ENCODE measurements at regions of chr17 and their contacts with region 1.

Region 1: DNA sequence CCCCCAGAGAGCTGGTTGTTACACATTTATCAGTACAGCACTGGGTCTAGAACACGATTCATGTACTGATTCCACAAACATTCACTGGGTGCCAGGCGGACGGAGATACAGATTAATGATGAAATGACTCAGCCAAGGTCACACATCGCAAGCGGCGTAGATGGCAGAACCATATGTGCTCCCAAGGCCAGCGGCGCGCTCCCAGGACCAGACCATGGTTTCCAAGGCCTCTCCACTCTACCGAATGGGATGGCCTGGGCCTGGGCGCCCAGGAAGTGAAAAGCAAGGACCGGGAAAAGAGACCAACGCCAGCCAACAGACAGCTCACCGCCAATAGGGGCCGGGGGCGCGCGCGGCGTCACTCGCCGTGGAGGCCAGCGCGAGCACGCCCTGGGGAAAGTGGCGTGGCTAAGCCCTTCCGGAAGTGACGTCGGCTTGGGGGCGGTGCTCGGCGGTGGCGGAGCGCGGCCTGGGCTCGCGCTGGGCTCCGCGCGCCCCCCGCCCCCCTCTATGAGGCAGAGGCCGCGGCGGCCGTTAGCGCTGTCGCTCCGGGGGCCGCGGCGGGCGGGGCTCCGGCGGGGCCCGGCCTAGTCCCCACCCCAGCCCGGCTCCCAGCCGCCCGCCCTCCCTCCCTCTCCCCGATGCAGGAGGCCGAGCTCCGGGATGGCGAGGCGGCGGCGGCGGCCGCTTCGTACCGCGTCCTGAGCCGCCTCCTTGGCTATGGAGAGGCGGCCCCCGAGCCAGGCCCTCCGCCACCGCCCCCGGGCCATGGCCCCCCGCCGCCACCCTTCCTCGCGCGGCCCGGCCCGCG is at the start of gene SOCS7:
- DNase-seq: peak; percentile 95
- CTCF ChIP-seq: no peak

Region 2: GRCh38 chr17:38322091-38322779 is 29.4 kb before region 1 on chr17:
- CTCF ChIA-PET with region 1: interaction called, 99 read pairs
- POLR2A ChIA-PET with region 1: no interaction called
- DNase-seq: peak; percentile 84
- CTCF ChIP-seq: peak; percentile 69

Region 3: DNA sequence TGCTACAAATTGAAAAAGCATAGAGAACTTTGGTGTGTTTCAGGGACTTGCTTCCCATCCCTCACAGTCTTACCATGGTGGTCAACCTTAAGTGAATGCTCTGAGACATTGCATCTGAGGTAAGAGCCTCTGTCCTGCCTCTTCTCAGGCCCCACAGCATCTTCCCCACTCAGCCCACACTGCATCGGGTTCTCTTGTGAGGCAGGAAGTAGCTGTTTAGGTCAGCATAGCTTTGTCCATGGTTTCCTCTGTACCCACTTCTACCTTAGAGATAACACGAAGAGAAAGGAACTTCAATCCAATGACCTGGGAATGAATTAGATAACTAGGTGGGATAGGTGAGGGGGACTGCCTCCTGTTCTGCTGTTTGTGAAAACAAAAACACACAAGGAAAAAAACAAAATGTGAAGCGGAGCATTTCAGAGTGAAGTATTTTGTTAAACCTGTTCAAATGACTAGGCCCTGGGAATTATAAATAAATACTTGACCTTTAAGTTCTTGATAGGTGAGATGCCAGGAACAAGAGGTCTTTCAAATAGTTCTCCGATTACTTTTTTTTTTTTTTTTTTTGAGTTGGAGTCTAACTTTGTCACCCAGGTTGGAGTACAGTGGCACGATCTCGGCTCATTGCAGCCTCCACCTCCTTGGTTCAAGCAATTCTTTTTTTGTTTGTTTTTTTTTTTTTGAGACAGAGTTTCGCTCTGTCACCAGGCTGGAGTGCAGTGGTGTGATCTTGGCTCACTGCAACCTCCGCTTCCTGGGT is 17.7 kb after region 1 on chr17:
- CTCF ChIA-PET with region 1: interaction called, 42 read pairs
- POLR2A ChIA-PET with region 1: interaction called, 5 read pairs
- DNase-seq: no peak
- CTCF ChIP-seq: no peak

Region 4: DNA sequence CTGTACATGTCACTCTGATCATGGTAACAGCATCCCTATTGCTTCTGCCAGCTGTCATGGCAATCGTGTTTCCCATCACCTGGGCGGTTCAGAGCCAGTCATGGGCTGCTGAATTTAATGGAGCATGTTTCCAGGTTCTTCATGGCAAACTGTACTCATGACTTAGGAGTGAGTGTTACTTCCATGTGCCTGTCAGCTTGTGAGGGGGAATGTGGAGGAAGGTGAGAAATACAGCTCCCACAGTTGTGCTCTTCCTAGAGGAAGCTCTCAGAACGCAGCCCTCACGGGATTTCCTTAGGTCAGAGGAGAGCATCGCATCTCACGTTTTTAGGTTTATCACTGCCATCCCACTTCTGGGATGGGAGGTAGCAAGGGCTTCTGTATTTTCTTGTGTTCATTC is 48.7 kb after region 1 on chr17:
- CTCF ChIA-PET with region 1: interaction called, 15 read pairs
- POLR2A ChIA-PET with region 1: no interaction called
- DNase-seq: no peak
- CTCF ChIP-seq: no peak

Region 5: DNA sequence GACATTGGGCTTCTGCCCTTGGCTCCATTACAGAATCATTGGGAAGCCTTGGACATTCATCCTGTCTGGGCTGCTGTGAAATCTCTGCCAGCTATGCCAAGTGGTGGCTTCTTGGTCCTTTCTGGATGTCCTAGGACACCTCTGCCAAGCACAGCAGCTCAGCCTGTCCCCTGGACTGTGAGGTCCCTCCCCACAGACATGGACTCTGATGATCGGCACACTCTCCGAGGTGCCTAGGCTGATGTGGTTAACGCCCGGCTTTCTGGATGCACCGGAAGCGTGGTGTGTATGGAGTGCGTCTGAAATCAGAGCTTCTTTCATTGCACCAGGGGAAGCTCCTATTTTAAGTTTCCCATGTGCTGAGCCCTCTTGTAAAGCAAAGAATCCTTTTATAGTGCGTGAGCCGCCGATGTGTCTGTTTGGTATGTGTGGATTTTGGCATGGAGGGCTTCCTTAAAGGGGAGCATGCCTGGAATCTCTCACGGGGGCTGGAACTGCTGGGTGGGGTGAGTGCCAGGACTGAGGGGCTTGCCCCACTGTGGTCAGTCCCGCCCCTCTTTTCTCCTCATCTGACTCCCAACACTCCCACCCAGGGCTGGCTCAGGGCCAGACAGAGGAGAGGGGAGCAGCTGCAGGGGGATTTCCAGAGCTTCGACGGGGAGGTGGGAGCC is 69.7 kb after region 1 on chr17:
- CTCF ChIA-PET with region 1: interaction called, 282 read pairs
- POLR2A ChIA-PET with region 1: no interaction called
- DNase-seq: no peak
- CTCF ChIP-seq: no peak